Mammary epithelial cell (primary cell): ENCODE measurements at regions of chr5 and their contacts with region 1.

Region 1: GRCh38 chr5:87541033-87541432 is 128.3 kb upstream of the CCNH start:
- DNase-seq: peak; percentile 63
- H3K4me3 ChIP-seq: no peak overlapping the region
- H3K27ac ChIP-seq: no peak overlapping the region
- H3K4me1 ChIP-seq: no peaks in the 10 kb centered on the region
- H3K27me3 ChIP-seq: no peaks in the 10 kb centered on the region
- CTCF ChIP-seq: peak; percentile 31 to 48

Region 2: GRCh38 chr5:87762631-87763030 is 221.6 kb after region 1 on chr5:
- CTCF ChIA-PET with region 1: no interaction called
- dilution Hi-C with region 1: no loop called
- in situ Hi-C with region 1: no loop called
- intact Hi-C with region 1: loop called (anchors 5 kb)
- DNase-seq: peak; percentile 41
- H3K4me3 ChIP-seq: no peak overlapping the region
- H3K27ac ChIP-seq: no peak overlapping the region
- H3K4me1 ChIP-seq: peaks cover 4% of the 10 kb centered on the region
- H3K27me3 ChIP-seq: no peaks in the 10 kb centered on the region
- CTCF ChIP-seq: no peak